Caco-2 (cell line): ENCODE measurements at regions of chrX and their contacts with region 1.

Region 1: DNA sequence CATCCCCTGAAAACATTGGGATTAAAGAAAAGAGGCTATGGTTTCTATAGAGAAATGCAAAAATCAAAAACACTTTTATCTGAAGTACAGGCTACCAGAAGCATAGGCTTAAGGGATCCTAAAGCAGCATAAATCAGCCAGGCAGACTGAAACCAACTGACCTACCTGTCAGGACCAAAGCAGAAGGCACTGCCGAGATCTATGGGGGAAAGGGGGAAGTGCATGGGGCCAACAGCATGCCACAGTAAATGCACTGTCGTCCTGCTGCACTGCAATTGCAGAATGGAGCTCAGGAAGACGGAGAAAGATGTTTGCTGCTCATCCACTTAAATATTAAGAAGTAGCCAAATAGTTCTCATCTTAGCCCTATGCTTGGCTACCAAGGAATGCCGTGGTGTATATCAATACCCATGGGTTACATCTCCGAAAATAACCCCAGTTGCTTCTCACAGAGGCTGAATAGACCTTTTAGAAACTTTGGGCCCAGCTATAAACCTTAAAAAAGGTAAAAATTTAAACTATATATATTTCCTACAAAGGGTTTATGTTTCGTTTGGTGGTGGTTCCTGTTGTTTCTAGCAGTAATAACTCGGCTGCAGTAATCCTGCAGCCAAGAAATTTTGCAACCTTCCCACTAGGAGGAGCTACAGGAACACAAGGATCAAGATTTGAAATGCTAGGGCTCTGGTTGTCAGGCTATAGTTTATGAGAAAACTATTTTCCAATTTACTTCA is 312.2 kb upstream of the DIAPH2 start:
- DNase-seq: peak; percentile 27 to 33
- H3K4me3 ChIP-seq: no peak overlapping the region
- H3K4me3 Mint-ChIP-seq: no peak overlapping the region
- H3K27ac Mint-ChIP-seq: no peak overlapping the region
- H3K4me1 ChIP-seq: no peaks in the 10 kb centered on the region
- H3K4me1 Mint-ChIP-seq: no peaks in the 10 kb centered on the region
- H3K27me3 ChIP-seq: no peaks in the 10 kb centered on the region
- H3K27me3 Mint-ChIP-seq: no peaks in the 10 kb centered on the region
- CTCF ChIP-seq: peak; percentile 36 to 77

Region 2: DNA sequence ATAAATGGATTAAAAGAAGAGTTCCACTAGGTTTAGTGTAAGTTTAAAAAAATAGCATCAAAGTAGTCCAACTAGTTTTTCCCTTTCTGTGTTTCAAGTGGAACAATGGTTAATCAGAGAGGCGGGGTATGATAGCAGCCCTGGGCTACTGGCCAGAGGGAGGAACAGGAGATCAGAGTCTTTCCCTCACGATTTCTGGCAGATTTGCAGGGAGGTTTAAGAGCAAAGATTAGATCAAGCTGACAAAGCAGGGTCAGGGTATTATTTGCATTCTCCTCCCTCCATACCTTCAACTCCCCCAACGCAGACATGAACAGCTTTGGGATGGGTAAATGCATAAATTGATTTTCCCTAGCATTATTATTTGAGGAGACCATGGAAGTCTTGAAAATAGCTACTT is 34.6 kb after region 1 on chrX:
- CTCF ChIA-PET with region 1: no interaction called
- POLR2A ChIA-PET with region 1: no interaction called
- intact Hi-C with region 1: loop called (anchors 2 kb)
- DNase-seq: peak; percentile 57 to 65
- H3K4me3 ChIP-seq: no peak overlapping the region
- H3K4me3 Mint-ChIP-seq: peak overlapping the region; percentile 44
- H3K27ac Mint-ChIP-seq: peak overlapping the region; percentile 42
- H3K4me1 ChIP-seq: peaks cover 27% of the 10 kb centered on the region
- H3K4me1 Mint-ChIP-seq: peaks cover 14% of the 10 kb centered on the region
- H3K27me3 ChIP-seq: no peaks in the 10 kb centered on the region
- H3K27me3 Mint-ChIP-seq: no peaks in the 10 kb centered on the region
- CTCF ChIP-seq: no peak

Region 3: GRCh38 chrX:96576368-96576767 is 203.9 kb after region 1 on chrX:
- CTCF ChIA-PET with region 1: no interaction called
- POLR2A ChIA-PET with region 1: no interaction called
- intact Hi-C with region 1: loop called (anchors 2 kb)
- DNase-seq: no peak
- H3K4me3 ChIP-seq: no peak overlapping the region
- H3K4me3 Mint-ChIP-seq: no peak overlapping the region
- H3K27ac Mint-ChIP-seq: no peak overlapping the region
- H3K4me1 ChIP-seq: no peaks in the 10 kb centered on the region
- H3K4me1 Mint-ChIP-seq: no peaks in the 10 kb centered on the region
- H3K27me3 ChIP-seq: no peaks in the 10 kb centered on the region
- H3K27me3 Mint-ChIP-seq: no peaks in the 10 kb centered on the region
- CTCF ChIP-seq: no peak

Region 4: DNA sequence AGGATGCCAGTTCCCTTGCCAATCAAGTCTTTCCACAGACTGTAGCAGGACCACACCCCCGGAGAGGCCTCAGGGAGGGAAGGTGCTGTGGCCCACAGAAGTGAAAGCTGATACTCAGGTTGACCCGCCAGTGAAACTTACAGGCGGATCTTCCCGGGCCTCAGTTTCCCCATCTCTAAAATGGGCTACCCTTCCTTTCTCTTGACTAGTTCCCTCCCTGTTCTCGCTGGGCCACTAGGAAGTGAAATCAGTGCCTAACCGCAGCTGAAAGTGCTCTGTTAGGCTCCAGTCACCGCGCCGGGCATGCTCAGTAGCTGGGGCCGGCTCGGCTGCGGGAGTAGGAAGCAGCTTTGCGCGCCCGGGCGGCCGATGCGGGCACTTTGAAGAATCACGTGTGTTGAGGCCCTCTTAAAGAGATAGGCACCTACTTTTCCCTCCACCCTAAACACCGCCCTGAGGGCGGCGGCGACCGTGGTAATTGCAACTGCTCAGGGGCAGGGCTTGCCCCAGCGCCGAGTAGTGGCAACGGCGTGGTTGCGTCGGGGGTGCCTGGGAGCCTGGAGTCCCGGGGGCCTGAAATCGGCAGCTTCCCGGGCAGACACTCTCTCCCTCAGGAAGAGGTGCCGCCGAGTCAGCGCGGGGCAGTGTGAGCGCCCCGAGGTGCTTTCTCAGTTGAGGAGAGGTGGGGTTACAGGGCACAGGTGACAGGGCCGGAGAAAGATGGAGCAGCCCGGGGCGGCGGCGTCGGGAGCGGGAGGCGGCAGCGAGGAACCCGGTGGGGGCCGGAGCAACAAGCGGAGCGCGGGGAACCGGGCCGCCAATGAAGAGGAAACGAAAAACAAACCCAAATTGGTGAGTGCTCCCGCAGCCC is 312.1 kb after region 1 on chrX and contains the start of gene DIAPH2:
- CTCF ChIA-PET with region 1: no interaction called
- POLR2A ChIA-PET with region 1: no interaction called
- intact Hi-C with region 1: loop called (anchors 1 kb)
- DNase-seq: peak; percentile 83 to 88
- H3K4me3 ChIP-seq: peak within 1 kb of the TSS; percentile 60
- H3K4me3 Mint-ChIP-seq: peak within 1 kb of the TSS; percentile 98
- H3K27ac Mint-ChIP-seq: peak within 1 kb of the TSS; percentile 86
- H3K4me1 ChIP-seq: no peaks in the 10 kb centered on the region
- H3K4me1 Mint-ChIP-seq: no peaks in the 10 kb centered on the region
- H3K27me3 ChIP-seq: no peaks in the 10 kb centered on the region
- H3K27me3 Mint-ChIP-seq: no peaks in the 10 kb centered on the region
- CTCF ChIP-seq: no peak
- total RNA-seq, gene DIAPH2: 16.1 and 18.2 TPM in 2 replicates

Region 5: GRCh38 chrX:96764864-96765263 is 392.4 kb after region 1 on chrX:
- CTCF ChIA-PET with region 1: no interaction called
- POLR2A ChIA-PET with region 1: no interaction called
- intact Hi-C with region 1: loop called (anchors 10 kb)
- DNase-seq: no peak
- H3K4me3 ChIP-seq: no peak overlapping the region
- H3K4me3 Mint-ChIP-seq: no peak overlapping the region
- H3K27ac Mint-ChIP-seq: no peak overlapping the region
- H3K4me1 ChIP-seq: no peaks in the 10 kb centered on the region
- H3K4me1 Mint-ChIP-seq: no peaks in the 10 kb centered on the region
- H3K27me3 ChIP-seq: no peaks in the 10 kb centered on the region
- H3K27me3 Mint-ChIP-seq: no peaks in the 10 kb centered on the region
- CTCF ChIP-seq: no peak